IMR-90 (cell line): ENCODE measurements at regions of chr14 and their contacts with region 1.

Region 1: DNA sequence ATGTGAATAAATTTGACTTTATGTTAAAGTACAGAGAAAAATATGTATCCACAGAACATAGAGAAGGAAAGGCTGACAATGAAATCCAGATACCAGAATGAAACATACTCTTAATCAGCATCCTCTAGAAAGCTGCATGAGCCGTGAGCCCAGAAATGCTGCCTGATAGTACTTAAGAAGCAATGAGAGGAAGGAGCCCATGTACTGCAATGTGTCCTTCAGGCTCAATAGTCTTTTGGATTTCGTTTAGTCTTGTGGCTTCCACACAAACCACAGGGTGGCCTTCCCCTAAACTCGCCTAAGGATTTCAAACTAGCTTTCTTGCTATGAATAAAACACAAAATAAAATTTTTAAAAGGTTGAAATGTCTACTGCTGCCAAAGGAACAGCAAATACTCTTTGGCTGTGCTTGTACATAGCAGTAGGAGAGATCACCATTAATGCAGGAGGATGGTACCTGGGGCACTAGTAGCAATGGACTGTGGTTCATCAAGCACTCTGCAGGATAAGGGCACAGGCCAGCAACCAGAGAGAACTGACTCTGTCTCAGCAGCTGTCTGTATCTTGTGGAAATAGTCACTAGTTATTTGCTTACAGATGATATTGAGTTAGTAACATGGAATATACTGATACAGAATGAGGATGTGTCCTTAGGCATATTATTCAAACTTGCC is 988.3 kb upstream of the LRFN5 start:
- DNase-seq: no peak
- ATAC-seq: no peak
- H3K4me3 ChIP-seq: no peak overlapping the region
- H3K27ac ChIP-seq: no peak overlapping the region
- H3K4me1 ChIP-seq: no peaks in the 10 kb centered on the region
- H3K27me3 ChIP-seq: no peaks in the 10 kb centered on the region
- CTCF ChIP-seq: no peak
- POLR2A ChIP-seq: no peak
- RAD21 ChIP-seq: no peak

Region 2: DNA sequence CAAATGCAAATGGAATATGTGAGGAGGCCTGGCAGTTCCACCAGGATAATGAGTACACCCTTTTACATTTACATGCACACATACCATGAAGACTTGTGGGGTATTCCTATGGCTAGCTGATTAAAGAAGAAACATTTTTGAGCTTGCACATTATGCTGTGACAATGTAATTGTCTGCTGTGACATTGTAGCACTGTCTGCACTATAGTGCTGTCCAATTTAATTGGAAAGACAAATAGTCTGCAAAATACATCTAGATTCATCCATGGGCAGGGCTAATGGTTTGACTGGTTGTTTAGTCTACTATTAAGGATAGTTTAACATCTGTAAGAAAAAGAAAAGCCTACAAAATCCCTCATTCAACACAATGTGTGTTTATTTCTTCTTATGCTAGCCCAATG is 17.3 kb before region 1 on chr14:
- CTCF ChIA-PET with region 1: no interaction called
- POLR2A ChIA-PET with region 1: no interaction called
- dilution Hi-C with region 1: no loop called
- in situ Hi-C with region 1: no loop called
- intact Hi-C with region 1: no loop called
- DNase-seq: no peak
- ATAC-seq: no peak
- H3K4me3 ChIP-seq: no peak overlapping the region
- H3K27ac ChIP-seq: no peak overlapping the region
- H3K4me1 ChIP-seq: no peaks in the 10 kb centered on the region
- H3K27me3 ChIP-seq: no peaks in the 10 kb centered on the region
- CTCF ChIP-seq: no peak
- POLR2A ChIP-seq: no peak
- RAD21 ChIP-seq: no peak

Region 3: GRCh38 chr14:41575357-41575756 is 957.0 kb after region 1 on chr14:
- CTCF ChIA-PET with region 1: no interaction called
- POLR2A ChIA-PET with region 1: no interaction called
- dilution Hi-C with region 1: no loop called
- in situ Hi-C with region 1: no loop called
- intact Hi-C with region 1: loop called (anchors 5 kb)
- DNase-seq: no peak
- ATAC-seq: no peak
- H3K4me3 ChIP-seq: no peak overlapping the region
- H3K27ac ChIP-seq: no peak overlapping the region
- H3K4me1 ChIP-seq: no peaks in the 10 kb centered on the region
- H3K27me3 ChIP-seq: no peaks in the 10 kb centered on the region
- CTCF ChIP-seq: no peak
- POLR2A ChIP-seq: no peak
- RAD21 ChIP-seq: no peak